HepG2 (cell line): ENCODE measurements at regions of chr10 and their contacts with region 1.

Region 1: GRCh38 chr10:101067356-101068083 is 5.7 kb downstream of the KAZALD1 start:
- DNase-seq: peak; percentile 81
- ATAC-seq: peak; percentile 17
- H3K4me3 ChIP-seq: peak overlapping the region; percentile 60 to 81 (median 62)
- H3K27ac ChIP-seq: peak overlapping the region; percentile 81
- H3K4me1 ChIP-seq: peaks cover 34% of the 10 kb centered on the region
- H3K27me3 ChIP-seq: peaks cover 2 to 16% of the 10 kb centered on the region in 2 experiments; a peak in 4 of 5 replicates
- CTCF ChIP-seq: peak; percentile 88
- EP300 ChIP-seq: peak in 1 of 2 experiments; percentile 38; a peak in 1 of 4 replicates
- POLR2A ChIP-seq: peak in 1 of 2 experiments; percentile 36; a peak in 1 of 4 replicates
- RAD21 ChIP-seq: peak; percentile 81

Region 2: GRCh38 chr10:101018600-101019439 is 48.7 kb before region 1 on chr10:
- CTCF ChIA-PET with region 1: interaction called, 3 read pairs
- POLR2A ChIA-PET with region 1: interaction called, 4 read pairs
- in situ Hi-C with region 1: no loop called
- intact Hi-C with region 1: loop called (anchors 2 kb)
- DNase-seq: peak; percentile 72
- ATAC-seq: peak; percentile 91
- H3K4me3 ChIP-seq: peak overlapping the region; percentile 25 to 69 (median 55); a peak in 5 of 6 replicates
- H3K27ac ChIP-seq: no peak overlapping the region
- H3K4me1 ChIP-seq: peaks cover 34% of the 10 kb centered on the region
- H3K27me3 ChIP-seq: peaks cover 1 to 13% of the 10 kb centered on the region in 2 experiments; a peak in 2 of 5 replicates
- CTCF ChIP-seq: peak; percentile 100
- EP300 ChIP-seq: no peak
- POLR2A ChIP-seq: no peak
- RAD21 ChIP-seq: peak; percentile 85

Region 3: GRCh38 chr10:101031128-101031795 is 36.3 kb before region 1 on chr10 and contains the starts of genes PDZD7 and SFXN3:
- CTCF ChIA-PET with region 1: no interaction called
- POLR2A ChIA-PET with region 1: interaction called, 12 read pairs
- in situ Hi-C with region 1: loop called (anchors 5 kb)
- intact Hi-C with region 1: loop called (anchors 5 kb)
- DNase-seq: peak; percentile 79
- ATAC-seq: peak; percentile 90
- H3K4me3 ChIP-seq: peak within 1 kb of the TSS; percentile 73 to 80 (median 74)
- H3K27ac ChIP-seq: peak within 1 kb of the TSS; percentile 65
- H3K4me1 ChIP-seq: peaks cover 66% of the 10 kb centered on the region
- H3K27me3 ChIP-seq: no peaks in the 10 kb centered on the region; a peak in 1 of 5 replicates
- CTCF ChIP-seq: no peak
- EP300 ChIP-seq: no peak
- POLR2A ChIP-seq: no peak
- RAD21 ChIP-seq: no peak
- total RNA-seq, gene PDZD7: 0.60 and 0.73 TPM in 2 replicates
- total RNA-seq, gene SFXN3: 11.9 and 16.8 TPM in 2 replicates

Region 4: DNA sequence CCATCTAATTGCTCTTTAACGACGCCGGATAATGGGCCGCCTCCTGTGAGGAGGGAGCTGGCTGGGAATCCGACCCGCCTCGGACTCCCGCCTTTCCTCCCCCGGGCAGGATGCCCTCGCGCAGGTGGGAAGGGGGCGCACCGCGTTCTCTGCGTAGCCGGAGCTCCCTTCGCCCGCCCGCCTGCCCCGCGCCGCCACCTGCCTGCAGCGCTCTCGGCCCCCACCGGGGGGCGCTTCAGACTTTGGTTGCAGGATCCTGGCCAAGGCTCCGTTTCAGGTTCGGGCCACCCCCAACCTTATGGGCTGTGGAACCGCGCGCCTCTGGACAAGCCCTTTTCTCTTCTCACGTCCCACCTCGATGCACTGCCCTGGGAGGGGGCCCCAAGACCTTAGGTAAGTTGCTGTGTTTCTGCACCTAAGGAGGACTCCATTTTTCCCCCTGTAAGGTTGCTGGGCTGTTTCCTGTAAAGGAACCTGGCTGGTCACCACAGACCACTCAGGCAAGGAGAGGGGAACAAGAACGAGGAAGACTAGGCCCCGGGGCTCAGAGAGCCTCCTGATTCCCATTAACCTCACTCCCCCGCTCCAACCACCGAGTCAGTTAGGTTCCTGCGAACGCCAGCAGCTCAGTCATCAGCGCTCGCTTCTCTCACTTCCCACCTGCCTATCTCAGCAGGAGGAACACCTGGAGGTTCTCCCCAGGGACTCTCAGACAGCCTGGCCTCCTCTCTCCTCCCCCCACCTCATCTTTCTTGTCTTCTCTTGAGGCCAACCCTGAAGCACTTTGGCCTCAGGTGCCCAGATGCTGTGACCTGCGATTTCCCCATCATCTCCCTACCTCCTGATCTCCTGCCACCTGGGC is 17.1 kb before region 1 on chr10:
- CTCF ChIA-PET with region 1: interaction called, 13 read pairs
- POLR2A ChIA-PET with region 1: interaction called, 35 read pairs
- in situ Hi-C with region 1: no loop called
- intact Hi-C with region 1: no loop called
- DNase-seq: peak; percentile 44
- ATAC-seq: peak; percentile 82
- H3K4me3 ChIP-seq: peak overlapping the region; percentile 32 to 67 (median 46); a peak in 5 of 6 replicates
- H3K27ac ChIP-seq: no peak overlapping the region
- H3K4me1 ChIP-seq: peaks cover 46% of the 10 kb centered on the region
- H3K27me3 ChIP-seq: no peaks in the 10 kb centered on the region; a peak in 1 of 5 replicates
- CTCF ChIP-seq: peak; percentile 84
- EP300 ChIP-seq: 0 out of 4 replicates have a peak, but pooled peaks of 1 of the 2 experiments have one; percentile 7
- POLR2A ChIP-seq: no peak
- RAD21 ChIP-seq: peak; percentile 78

Region 5: GRCh38 chr10:101141616-101142532 is 74.4 kb after region 1 on chr10:
- CTCF ChIA-PET with region 1: no interaction called
- POLR2A ChIA-PET with region 1: interaction called, 20 read pairs
- in situ Hi-C with region 1: no loop called
- intact Hi-C with region 1: no loop called
- DNase-seq: peak; percentile 71
- ATAC-seq: peak; percentile 90
- H3K4me3 ChIP-seq: peak overlapping the region; percentile 27 to 71 (median 52)
- H3K27ac ChIP-seq: no peak overlapping the region
- H3K4me1 ChIP-seq: peaks cover 24% of the 10 kb centered on the region
- H3K27me3 ChIP-seq: peaks cover 12 to 66% of the 10 kb centered on the region in 2 experiments
- CTCF ChIP-seq: peak; percentile 95
- EP300 ChIP-seq: no peak
- POLR2A ChIP-seq: no peak
- RAD21 ChIP-seq: peak; percentile 95